ENCODE measurements at regions of chr13 and their contacts with region 1.

Region 1: GRCh38 chr13:97018029-97018831 is 24.0 kb upstream of the OXGR1 start:
- DNase-seq: peak; percentile 50
- ATAC-seq: peak; percentile 68
- H3K4me3 Mint-ChIP-seq: no peak overlapping the region
- H3K27ac Mint-ChIP-seq: no peak overlapping the region
- H3K4me1 Mint-ChIP-seq: peaks cover 7% of the 10 kb centered on the region
- H3K27me3 Mint-ChIP-seq: peaks cover 41% of the 10 kb centered on the region

Region 2: DNA sequence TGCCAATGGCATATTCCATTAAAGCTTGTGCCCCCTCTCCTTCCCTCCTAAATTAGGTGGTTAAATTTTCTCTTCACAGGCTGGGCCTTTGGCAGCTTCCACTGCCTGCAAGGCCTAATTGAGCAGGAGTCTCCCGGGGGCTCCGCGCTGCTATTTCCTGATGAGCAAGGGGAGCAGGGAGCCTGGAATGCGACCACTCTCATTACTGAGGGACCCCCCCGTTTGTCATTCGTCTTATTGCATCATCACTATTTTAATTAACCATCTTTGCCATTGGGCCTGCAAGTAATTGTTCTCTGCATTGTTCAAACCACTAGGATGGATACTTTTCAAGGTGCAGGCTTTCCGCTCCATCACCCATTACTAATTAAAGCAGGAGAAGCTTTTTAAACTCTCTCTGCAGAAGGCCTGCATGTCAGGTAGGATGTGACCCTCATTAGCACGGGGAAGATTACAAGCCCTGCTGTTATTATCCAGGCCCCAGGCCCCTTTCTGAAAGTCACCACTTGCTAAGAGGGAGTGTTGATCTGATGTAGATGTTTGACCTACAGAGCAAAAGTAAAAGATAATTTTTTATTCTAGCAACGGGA is 166.3 kb before region 1 on chr13:
- CTCF ChIA-PET with region 1: no interaction called
- POLR2A ChIA-PET with region 1: no interaction called
- intact Hi-C with region 1: no loop called
- DNase-seq: no peak
- ATAC-seq: no peak
- H3K4me3 Mint-ChIP-seq: no peak overlapping the region
- H3K27ac Mint-ChIP-seq: no peak overlapping the region
- H3K4me1 Mint-ChIP-seq: no peaks in the 10 kb centered on the region
- H3K27me3 Mint-ChIP-seq: no peaks in the 10 kb centered on the region

Region 3: DNA sequence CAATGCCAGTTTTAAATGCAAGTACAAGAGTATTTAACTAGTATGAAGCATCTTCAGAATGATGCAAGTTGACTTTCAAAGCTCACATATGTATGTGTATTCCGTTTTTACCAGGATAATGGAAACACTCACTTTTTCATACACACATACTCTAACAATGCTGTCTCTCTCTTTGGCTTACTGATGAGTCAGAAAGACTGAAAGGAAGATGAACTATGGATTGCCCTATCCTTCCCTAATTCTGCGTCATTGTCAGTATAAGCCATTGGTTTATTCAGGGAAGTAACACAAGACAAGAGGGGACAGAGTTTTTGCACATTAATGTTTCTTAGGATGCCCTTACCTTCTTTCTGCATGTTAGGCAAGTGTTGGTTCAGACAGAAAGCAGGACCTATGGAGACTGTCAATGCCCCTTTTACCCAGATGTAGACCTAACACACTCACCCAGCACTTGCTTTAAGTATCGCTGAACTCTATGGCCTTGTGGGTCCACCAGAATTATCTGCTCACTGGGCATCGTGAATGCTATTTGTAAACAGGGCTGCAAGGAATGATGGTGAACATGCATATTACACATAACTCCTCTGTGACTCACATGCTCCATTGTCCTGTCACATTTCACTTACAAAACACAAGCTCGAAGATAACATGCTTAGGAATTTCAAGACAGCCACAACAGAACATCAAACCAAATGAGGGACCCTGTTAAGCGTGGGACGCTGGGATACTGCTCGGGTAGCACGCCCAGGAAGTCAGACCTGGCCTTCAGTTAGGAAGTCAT is 13.9 kb before region 1 on chr13:
- CTCF ChIA-PET with region 1: interaction called, 11 read pairs
- POLR2A ChIA-PET with region 1: no interaction called
- intact Hi-C with region 1: no loop called
- DNase-seq: no peak
- ATAC-seq: no peak
- H3K4me3 Mint-ChIP-seq: no peak overlapping the region
- H3K27ac Mint-ChIP-seq: no peak overlapping the region
- H3K4me1 Mint-ChIP-seq: no peaks in the 10 kb centered on the region
- H3K27me3 Mint-ChIP-seq: peaks cover 10% of the 10 kb centered on the region

Region 4: GRCh38 chr13:97030705-97031452 is 12.6 kb after region 1 on chr13:
- CTCF ChIA-PET with region 1: interaction called, 10 read pairs
- POLR2A ChIA-PET with region 1: no interaction called
- intact Hi-C with region 1: loop called in 1 of 2 experiments (anchors 1 kb)
- DNase-seq: no peak
- ATAC-seq: no peak
- H3K4me3 Mint-ChIP-seq: no peak overlapping the region
- H3K27ac Mint-ChIP-seq: no peak overlapping the region
- H3K4me1 Mint-ChIP-seq: no peaks in the 10 kb centered on the region
- H3K27me3 Mint-ChIP-seq: peaks cover 16% of the 10 kb centered on the region

Region 5: DNA sequence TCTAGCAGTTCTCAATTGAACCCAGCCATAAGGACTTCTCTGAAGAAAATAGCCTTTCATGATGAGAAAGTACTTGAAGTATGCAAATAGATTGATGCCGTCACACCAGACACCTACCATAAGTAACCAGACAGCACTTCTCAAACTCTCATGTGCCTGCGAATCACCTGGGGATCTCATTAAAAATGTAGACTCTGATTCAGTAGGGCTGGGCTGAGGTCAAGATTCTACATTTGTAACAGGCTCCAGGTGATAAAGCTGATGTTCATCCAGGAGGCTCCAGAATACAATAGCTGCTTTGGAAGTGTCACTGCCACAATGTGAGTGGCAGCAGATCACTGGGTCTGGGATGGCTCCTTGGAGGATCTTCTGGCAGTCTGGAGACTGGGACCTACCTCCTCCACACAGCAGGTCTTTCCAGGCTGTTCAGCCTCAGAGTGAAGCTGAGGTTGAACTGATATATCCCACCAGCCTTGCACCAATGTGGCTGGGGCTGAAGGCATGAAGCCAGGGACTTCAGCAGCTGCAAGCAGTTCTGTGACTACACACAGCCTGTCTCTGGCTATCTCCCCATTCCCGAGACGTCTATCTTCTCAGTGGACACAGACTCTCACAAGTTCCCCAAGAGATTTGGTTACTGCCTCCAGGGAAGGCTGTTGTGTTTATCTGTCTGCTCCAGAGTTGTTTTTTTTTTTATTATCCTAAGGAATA is 213.0 kb after region 1 on chr13:
- CTCF ChIA-PET with region 1: no interaction called
- POLR2A ChIA-PET with region 1: no interaction called
- intact Hi-C with region 1: no loop called
- DNase-seq: no peak
- ATAC-seq: no peak
- H3K4me3 Mint-ChIP-seq: no peak overlapping the region
- H3K27ac Mint-ChIP-seq: no peak overlapping the region
- H3K4me1 Mint-ChIP-seq: peaks cover 43% of the 10 kb centered on the region
- H3K27me3 Mint-ChIP-seq: no peaks in the 10 kb centered on the region

Region 6: GRCh38 chr13:97798836-97799235 is 780.6 kb after region 1 on chr13:
- CTCF ChIA-PET with region 1: no interaction called
- POLR2A ChIA-PET with region 1: no interaction called
- intact Hi-C with region 1: loop called in 1 of 2 experiments (anchors 2 kb)
- DNase-seq: no peak
- ATAC-seq: no peak
- H3K4me3 Mint-ChIP-seq: no peak overlapping the region
- H3K27ac Mint-ChIP-seq: no peak overlapping the region
- H3K4me1 Mint-ChIP-seq: no peaks in the 10 kb centered on the region
- H3K27me3 Mint-ChIP-seq: peaks cover 19% of the 10 kb centered on the region

Measured in activated CD4-positive, alpha-beta T cell treated with anti-CD3 and anti-CD28 coated beads for 36 hours (primary cell).